Heart left ventricle (tissue), 16 donors: ENCODE measurements at regions of chr14 and their contacts with region 1.

Region 1: DNA sequence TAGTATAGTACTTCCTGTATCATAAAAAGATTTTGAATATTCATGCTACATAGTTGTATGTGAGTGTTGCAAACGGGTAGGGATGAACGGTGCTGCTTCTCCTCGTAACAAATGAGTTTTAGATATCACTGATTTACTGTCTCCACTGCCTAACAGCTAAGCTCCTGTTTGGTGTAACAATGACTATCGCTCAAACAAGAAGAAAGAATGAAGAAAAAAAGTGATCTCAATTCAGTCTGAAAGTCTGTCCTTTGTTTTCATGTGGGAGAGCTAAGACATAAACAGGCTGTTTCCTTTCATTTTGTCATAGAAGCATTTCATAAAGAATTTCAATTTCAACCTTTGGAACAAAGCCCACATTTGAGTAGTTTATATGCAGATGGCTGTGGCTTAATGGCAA is 26.1 kb upstream of the RTRAF start:
- DNase-seq: no peak
- ATAC-seq: no peak
- H3K4me3 ChIP-seq: peak overlapping the region in 8 of 12 donors; percentile 6 to 35 (median 11)
- H3K27ac ChIP-seq: peak overlapping the region in 4 of 12 donors; percentile 1 to 34 (median 19)
- H3K4me1 ChIP-seq: peaks cover 0 to 24% (median 4%) of the 10 kb centered on the region in 12 donors
- H3K27me3 ChIP-seq: peaks cover 0 to 3% (median 0%) of the 10 kb centered on the region in 9 donors
- CTCF ChIP-seq: no peak
- POLR2A ChIP-seq: no peak

Region 2: DNA sequence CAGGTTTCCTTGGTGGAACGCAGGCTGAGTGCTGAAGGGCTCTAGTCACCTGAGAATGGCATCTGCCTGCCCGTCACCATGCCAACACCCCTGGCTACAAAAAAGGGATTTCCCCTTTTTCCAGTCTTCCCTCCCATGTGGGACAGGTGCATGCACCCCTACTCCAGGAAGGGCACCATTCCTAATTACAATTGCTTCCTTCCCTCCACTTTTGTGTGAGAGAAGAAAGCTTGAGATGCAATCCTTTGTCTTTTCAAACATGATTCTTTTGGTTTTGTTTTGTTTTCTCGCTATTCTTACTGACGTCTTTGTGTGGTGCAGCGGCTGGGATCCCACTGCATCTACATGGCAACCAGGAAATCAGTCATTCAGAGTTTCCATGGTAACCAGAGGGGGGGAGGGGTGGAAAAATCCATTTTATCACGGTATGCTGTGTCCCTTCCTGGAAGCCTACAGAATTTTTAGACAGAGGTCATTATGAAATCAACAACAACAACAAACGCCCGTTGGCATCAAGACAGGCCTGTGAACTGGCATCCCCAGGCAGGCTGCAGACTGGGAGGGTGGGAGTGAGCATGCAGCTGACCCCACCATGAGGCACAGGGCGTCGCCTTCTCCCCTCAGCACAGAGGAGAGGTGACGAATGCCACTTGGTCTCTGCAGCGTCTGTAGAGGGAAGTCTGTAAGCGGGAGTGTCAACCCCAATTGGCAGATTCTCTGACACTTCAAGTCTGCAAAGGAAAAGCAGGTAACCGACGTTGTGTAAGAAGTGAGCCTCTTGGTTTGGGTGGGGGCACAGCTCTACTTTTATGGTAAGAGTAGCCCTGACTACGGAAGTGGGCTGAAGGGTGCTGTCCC is 116.4 kb before region 1 on chr14:
- intact Hi-C with region 1: loop called in 1 of 10 experiments (anchors 10 kb)
- DNase-seq: peak; percentile 32 to 70 (median 38)
- ATAC-seq: peak; percentile 49 to 85 (median 77)
- H3K4me3 ChIP-seq: peak overlapping the region in 7 of 12 donors; percentile 16 to 54 (median 22)
- H3K27ac ChIP-seq: peak overlapping the region in 8 of 12 donors; percentile 1 to 92 (median 18)
- H3K4me1 ChIP-seq: peaks cover 0 to 47% (median 0%) of the 10 kb centered on the region in 12 donors
- H3K27me3 ChIP-seq: no peaks in the 10 kb centered on the region
- CTCF ChIP-seq: no peak
- POLR2A ChIP-seq: no peak

Region 3: GRCh38 chr14:51884086-51884927 is 79.0 kb before region 1 on chr14:
- intact Hi-C with region 1: no loop called
- DNase-seq: no peak
- ATAC-seq: peak; percentile 58 to 83 (median 81)
- H3K4me3 ChIP-seq: no peak overlapping the region
- H3K27ac ChIP-seq: peak overlapping the region in 9 of 12 donors; percentile 2 to 67 (median 50)
- H3K4me1 ChIP-seq: peaks cover 0 to 35% (median 5%) of the 10 kb centered on the region in 12 donors
- H3K27me3 ChIP-seq: no peaks in the 10 kb centered on the region
- CTCF ChIP-seq: no peak
- POLR2A ChIP-seq: no peak